ENCODE measurements at regions of chr4 and their contacts with region 1.

Region 1: GRCh38 chr4:128191115-128191781 is 96.4 kb downstream of the PGRMC2 start:
- DNase-seq: peak; percentile 79
- H3K4me3 ChIP-seq: no peak overlapping the region
- H3K27ac ChIP-seq: no peak overlapping the region
- H3K4me1 ChIP-seq: no peaks in the 10 kb centered on the region
- H3K27me3 ChIP-seq: no peaks in the 10 kb centered on the region
- CTCF ChIP-seq: peak; percentile 96

Region 2: DNA sequence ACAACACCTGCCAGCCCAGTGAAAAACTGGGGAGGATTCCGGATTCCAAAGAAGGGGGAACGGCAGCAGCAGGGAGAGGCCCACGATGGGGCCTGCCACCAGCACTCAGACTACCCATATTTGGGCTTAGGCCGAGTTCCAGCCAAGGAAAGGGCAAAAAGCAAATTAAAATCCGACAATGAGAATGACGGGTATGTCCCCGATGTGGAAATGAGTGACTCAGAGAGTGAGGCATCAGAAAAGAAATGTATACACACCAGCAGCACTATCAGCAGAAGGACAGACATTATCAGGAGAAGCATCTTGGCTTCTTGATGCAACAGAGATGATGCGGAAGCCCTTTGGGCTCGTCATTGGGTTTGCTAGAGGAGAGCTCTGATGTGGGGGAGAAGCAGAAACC is 680.7 kb after region 1 on chr4:
- CTCF ChIA-PET with region 1: no interaction called
- POLR2A ChIA-PET with region 1: no interaction called
- intact Hi-C with region 1: loop called (anchors 5 kb)
- DNase-seq: no peak
- H3K4me3 ChIP-seq: no peak overlapping the region
- H3K27ac ChIP-seq: no peak overlapping the region
- H3K4me1 ChIP-seq: peaks cover 7% of the 10 kb centered on the region
- H3K27me3 ChIP-seq: no peaks in the 10 kb centered on the region
- CTCF ChIP-seq: no peak